ENCODE measurements at regions of chr17 and their contacts with region 1.

Region 1: DNA sequence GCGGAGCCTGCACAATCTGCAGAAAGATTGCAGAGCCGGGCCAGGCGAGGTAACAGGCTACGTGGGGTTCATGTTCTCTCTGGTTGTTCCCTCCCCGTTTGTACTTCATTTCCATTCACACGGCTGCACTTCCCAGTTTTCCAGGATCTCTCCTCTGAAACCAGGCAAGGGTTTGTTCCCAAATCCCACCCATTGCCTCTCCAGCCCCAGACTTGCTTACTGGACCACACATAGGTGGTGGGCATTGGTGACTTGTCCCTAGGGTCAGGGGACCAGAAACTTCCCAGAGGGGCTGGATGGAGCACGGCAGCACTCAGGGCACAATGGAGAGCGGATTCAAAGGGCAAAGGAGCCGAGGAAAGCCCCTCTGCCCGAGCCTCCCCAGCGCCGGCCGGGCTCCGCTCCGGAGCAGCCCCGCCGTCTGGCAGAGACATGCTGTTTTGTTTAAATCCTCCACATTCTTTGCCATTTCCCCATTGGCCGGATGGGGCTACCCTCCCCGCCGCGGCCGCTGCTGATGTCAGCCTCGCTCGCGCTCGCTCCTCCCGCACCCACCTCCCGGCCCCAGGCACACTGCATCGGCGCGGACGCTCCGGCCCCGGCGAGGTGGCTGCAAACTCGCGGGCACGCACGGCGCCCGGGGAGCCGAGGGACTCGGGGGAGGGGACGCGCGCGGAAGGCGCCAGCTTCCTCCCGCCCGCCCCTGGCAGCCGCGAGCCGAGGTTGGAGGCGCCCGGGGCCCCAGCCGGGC is at the start of gene PITPNC1:
- DNase-seq: peak; percentile 90
- ATAC-seq: peak; percentile 74
- H3K4me3 ChIP-seq: peak within 1 kb of the TSS; percentile 54 to 90 (median 86)
- H3K4me3 Mint-ChIP-seq: peak within 1 kb of the TSS; percentile 94
- H3K27ac ChIP-seq: peak within 1 kb of the TSS; percentile 47
- H3K27ac Mint-ChIP-seq: peak within 1 kb of the TSS; percentile 92
- H3K4me1 ChIP-seq: peaks cover 25 to 30% of the 10 kb centered on the region in 2 donors
- H3K4me1 Mint-ChIP-seq: peaks cover 26% of the 10 kb centered on the region
- H3K27me3 ChIP-seq: no peaks in the 10 kb centered on the region
- H3K27me3 Mint-ChIP-seq: no peaks in the 10 kb centered on the region
- CTCF ChIP-seq: no peak
- total RNA-seq, gene PITPNC1: 24.5 and 26.1 TPM in 2 replicates

Region 2: DNA sequence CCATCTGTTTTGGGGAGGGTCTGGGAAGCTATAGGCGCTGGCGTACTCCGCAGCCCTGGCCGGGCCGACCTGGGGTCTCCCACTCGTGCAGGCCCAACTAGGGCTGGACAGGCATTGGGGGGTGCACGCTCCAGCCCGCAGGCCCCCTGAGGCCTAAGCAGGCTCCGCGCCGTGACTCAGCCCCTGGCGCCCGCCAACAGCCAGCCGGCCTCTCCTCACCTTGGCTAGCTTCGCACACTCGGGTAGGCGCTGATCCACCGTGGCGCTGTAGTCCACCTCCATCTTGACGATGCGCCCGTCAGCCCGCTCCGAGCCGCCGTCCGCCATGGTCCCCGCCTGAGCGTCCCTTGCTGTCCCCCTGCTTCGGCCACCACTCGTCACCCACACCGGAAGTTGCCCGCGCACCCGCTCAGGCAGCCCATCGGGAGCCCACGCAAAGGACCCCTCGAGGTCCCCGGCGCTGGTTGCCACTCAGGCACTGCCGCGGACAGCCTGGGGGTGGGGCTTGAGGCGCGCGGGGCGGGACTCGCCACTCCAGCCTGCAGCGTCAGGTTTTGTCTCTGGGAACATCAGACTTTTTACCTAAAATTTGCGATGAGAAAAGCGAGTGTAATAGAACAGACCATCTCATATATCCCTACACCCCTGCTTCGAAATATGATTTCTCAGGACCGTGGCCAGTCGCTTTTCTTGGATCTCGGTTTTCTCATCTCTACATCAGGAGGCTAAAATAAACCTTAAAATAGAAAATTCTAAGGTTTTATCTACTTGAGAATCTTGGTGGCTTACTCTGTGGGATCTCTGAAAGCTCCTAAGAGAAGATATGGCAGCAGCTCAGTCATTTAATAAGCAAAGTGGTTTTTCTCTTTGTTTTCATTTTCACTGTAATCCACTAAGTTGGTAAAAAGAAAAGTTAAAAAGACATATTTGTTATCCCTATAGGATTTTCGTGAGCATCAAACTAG is 10.4 kb before region 1 on chr17 and contains the start of gene PSMD12:
- CTCF ChIA-PET with region 1: interaction called, 66 read pairs
- POLR2A ChIA-PET with region 1: interaction called, 3 read pairs
- intact Hi-C with region 1: loop called (anchors 1 kb)
- DNase-seq: peak; percentile 92
- ATAC-seq: peak; percentile 99
- H3K4me3 ChIP-seq: peak within 1 kb of the TSS; percentile 83 to 97 (median 94)
- H3K4me3 Mint-ChIP-seq: peak within 1 kb of the TSS; percentile 98
- H3K27ac ChIP-seq: peak within 1 kb of the TSS; percentile 85
- H3K27ac Mint-ChIP-seq: peak within 1 kb of the TSS; percentile 97
- H3K4me1 ChIP-seq: peaks cover 21 to 22% of the 10 kb centered on the region in 2 donors
- H3K4me1 Mint-ChIP-seq: peaks cover 38% of the 10 kb centered on the region
- H3K27me3 ChIP-seq: no peaks in the 10 kb centered on the region
- H3K27me3 Mint-ChIP-seq: no peaks in the 10 kb centered on the region
- CTCF ChIP-seq: no peak
- total RNA-seq, gene PSMD12: 36.5 and 36.7 TPM in 2 replicates

Region 3: DNA sequence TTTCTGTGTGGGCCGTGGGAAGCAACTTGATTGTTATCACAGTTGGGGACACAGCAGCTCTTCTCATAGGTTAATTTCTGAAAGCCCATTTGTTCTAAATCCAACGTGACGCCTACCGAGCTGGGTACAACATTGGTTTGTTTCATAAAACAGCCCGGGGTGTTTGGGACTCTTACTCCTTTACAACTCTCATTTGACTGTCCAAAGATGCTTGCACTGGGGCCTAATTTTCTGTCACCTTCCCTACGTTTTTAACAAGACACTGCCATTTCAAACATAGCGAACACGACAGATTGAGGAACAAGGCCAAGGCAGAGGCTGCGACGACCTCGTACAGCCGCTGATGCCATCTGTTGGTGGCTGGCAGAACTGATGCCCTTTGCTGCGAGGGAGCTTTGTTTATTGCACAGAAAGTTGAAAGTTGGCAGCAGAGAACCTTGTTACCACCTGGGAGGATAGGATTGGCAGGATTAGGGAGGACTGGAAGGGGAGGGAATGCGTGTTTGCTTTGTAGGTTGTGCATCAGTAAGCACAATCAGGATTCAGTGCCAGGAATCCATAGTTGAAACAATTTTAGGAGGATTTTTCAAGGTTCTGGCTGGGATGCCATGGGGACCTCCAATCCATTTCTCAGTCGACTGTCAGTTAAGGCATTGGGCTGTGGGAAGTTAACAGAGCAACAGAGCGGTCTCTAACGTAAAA is 98.5 kb after region 1 on chr17:
- CTCF ChIA-PET with region 1: interaction called, 178 read pairs
- POLR2A ChIA-PET with region 1: interaction called, 4 read pairs
- intact Hi-C with region 1: loop called (anchors 1 kb)
- DNase-seq: peak; percentile 81
- ATAC-seq: peak; percentile 95
- H3K4me3 ChIP-seq: no peak overlapping the region
- H3K4me3 Mint-ChIP-seq: peak overlapping the region; percentile 44
- H3K27ac ChIP-seq: no peak overlapping the region
- H3K27ac Mint-ChIP-seq: peak overlapping the region; percentile 33
- H3K4me1 ChIP-seq: peaks cover 0 to 8% of the 10 kb centered on the region in 2 donors
- H3K4me1 Mint-ChIP-seq: peaks cover 10% of the 10 kb centered on the region
- H3K27me3 ChIP-seq: no peaks in the 10 kb centered on the region
- H3K27me3 Mint-ChIP-seq: no peaks in the 10 kb centered on the region
- CTCF ChIP-seq: peak; percentile 91

Region 4: DNA sequence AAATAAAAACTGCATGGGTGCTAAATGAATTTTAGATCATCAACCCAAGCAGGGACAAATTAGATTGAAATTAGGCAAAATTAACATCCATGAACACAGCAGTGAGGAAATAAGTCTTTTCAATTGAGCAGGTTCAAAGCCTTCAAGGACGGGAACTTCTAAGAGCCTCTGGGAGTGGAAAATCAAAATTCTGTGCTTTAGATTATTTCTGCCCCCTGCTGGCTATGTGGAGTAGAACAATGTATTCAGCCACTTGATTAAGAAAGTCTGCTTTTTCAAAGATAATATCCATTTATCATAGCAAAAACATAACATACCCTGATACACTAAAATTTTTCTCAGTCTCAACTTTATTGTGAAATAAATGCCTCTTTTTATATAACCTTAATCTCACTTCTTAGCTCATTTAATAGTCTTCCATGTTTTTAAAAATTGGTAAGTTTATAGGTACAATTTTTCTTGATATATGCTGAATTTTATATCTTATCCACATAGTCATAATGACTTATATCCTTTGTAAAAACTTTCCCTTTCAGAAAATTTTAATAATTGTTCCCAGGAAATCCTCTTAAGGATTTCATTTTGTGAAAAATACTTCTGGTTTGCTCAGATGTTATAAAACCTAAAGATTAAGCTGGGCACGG is 312.7 kb after region 1 on chr17:
- CTCF ChIA-PET with region 1: interaction called, 50 read pairs
- POLR2A ChIA-PET with region 1: no interaction called
- intact Hi-C with region 1: loop called (anchors 1 kb)
- DNase-seq: peak; percentile 71
- ATAC-seq: peak; percentile 63
- H3K4me3 ChIP-seq: no peak overlapping the region
- H3K4me3 Mint-ChIP-seq: no peak overlapping the region
- H3K27ac ChIP-seq: no peak overlapping the region
- H3K27ac Mint-ChIP-seq: no peak overlapping the region
- H3K4me1 ChIP-seq: no peaks in the 10 kb centered on the region
- H3K4me1 Mint-ChIP-seq: peaks cover 4% of the 10 kb centered on the region
- H3K27me3 ChIP-seq: no peaks in the 10 kb centered on the region
- H3K27me3 Mint-ChIP-seq: no peaks in the 10 kb centered on the region
- CTCF ChIP-seq: peak; percentile 96

Region 5: GRCh38 chr17:68512247-68512982 is 1135.5 kb after region 1 on chr17 and contains the start of gene PRKAR1A:
- CTCF ChIA-PET with region 1: no interaction called
- POLR2A ChIA-PET with region 1: no interaction called
- intact Hi-C with region 1: loop called (anchors 2 kb)
- DNase-seq: peak; percentile 98
- ATAC-seq: peak; percentile 75
- H3K4me3 ChIP-seq: peak within 1 kb of the TSS; percentile 62 to 99 (median 85)
- H3K4me3 Mint-ChIP-seq: peak within 1 kb of the TSS; percentile 100
- H3K27ac ChIP-seq: peak within 1 kb of the TSS; percentile 99
- H3K27ac Mint-ChIP-seq: peak within 1 kb of the TSS; percentile 100
- H3K4me1 ChIP-seq: peaks cover 25 to 28% of the 10 kb centered on the region in 2 donors
- H3K4me1 Mint-ChIP-seq: peaks cover 42% of the 10 kb centered on the region
- H3K27me3 ChIP-seq: no peaks in the 10 kb centered on the region
- H3K27me3 Mint-ChIP-seq: no peaks in the 10 kb centered on the region
- CTCF ChIP-seq: no peak
- total RNA-seq, gene PRKAR1A: 296 and 297 TPM in 2 replicates

Measured in B cell (primary cell).